Right ventricle myocardium inferior (tissue), 1 donor: ENCODE measurements at regions of chr2 and their contacts with region 1.

Region 1: DNA sequence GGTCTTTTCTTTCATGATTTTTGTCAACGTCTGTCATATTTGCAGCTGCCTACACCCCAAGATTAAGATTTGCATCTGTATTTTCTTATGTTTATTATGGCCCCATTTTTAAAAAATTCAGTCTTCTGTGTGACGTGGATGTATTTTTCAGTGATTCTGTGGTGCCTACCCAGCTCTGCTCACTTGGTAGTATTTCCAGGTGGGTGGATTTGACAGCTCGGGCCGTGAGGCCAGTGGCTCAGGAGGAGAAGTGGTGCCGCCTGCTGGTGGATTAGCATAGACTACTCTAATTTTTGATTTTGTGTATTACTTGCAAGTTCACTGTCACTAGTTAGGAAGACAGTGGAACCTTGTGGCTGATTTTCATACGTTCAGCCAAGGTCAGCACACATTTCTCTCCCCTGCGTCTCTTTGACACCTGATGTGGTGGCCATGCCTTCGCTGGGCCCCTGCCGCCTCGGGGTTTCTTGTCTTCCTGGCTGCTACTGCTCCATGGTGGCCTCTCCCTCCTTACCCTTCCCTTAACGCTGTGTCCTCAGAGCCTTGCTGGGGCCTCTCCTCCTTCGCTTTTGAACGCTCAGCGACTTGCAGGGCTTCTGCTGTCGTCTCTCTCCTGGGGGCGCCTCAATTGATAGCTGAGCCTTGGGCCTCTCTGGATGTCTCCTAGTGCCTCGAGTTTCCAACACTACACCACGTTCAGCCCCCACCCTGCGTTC is 89.3 kb downstream of the DGKD start:
- DNase-seq: peak; percentile 86
- ATAC-seq: peak; percentile 61

Region 2: DNA sequence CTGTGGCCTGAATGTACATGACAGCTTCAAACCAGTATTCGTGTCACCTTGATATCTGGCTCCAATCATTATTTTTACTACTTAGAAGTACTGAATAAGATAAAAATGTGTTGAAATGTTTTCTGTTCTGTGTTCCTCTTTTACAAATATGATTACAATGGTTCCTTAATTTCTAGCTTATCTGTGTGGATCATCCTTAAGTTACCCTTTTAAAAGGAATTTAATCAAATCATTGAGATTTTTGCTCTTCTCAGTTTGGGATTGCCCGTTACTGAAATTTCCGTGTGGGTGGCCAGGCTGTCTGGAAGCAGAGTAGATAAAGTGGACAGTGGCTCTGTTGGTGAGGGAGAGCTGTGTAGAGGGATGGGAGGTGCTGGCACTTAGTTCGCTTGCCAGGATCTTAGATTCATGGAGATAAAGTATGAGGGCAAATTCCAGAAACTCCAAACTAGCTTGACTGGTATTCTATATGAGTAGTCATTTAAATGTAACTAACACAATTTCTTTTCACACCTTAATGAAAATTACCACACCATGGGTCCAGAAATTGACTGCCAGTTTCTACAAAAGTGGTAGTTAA is 163.4 kb before region 1 on chr2:
- intact Hi-C with region 1: loop called (anchors 5 kb)
- DNase-seq: no peak
- ATAC-seq: no peak

Region 3: DNA sequence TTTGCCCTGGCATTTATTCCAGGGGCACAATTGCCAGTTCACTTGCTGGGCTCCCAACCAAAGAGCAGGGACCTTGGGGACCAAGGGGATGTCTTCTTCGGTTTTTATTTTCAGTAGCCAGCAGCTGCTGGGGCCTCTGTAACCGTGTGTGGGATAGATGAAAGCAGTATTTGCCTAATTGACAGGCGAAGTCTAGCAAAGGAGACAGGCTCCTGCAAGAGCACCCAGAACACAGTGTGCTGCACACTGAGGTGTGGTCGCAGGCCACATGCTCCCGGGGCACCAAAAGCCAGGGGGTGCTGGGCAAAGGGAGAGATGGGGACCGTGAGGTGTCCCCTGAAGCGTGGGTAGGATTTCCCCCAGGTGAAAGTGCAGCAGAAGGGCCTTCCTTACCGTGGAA is 130.8 kb before region 1 on chr2:
- intact Hi-C with region 1: no loop called
- DNase-seq: no peak
- ATAC-seq: no peak

Region 4: GRCh38 chr2:233353769-233354499 is 89.7 kb before region 1 on chr2 and contains the start of gene DGKD:
- intact Hi-C with region 1: loop called (anchors 1 kb)
- DNase-seq: peak; percentile 87
- ATAC-seq: peak; percentile 79
- total RNA-seq, gene DGKD: 29.2 TPM

Region 5: DNA sequence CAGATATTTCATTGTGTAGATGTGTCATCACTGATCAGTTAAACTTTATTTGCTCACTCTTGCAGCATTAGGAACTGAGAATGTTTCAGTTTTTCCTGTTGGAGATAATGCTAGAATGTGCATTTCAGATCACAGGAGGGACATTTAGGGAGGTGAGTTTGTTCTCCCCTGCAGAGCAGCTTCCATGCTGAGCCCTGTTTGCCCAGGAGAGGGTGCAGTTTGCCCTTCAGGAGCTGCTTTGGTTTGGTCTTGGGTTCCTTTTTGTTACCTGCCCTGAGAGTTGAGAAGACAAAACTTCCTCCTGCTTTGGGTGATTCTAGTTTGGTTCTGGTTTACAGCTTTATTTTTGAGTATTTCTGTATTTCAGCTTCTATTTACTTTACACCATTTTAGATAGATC is 39.4 kb before region 1 on chr2:
- intact Hi-C with region 1: loop called (anchors 1 kb)
- DNase-seq: no peak
- ATAC-seq: no peak